ENCODE measurements at regions of chr2 and their contacts with region 1.

Region 1: GRCh38 chr2:114968748-114969400 is 526.4 kb downstream of the DPP10 start:
- DNase-seq: no peak
- ATAC-seq: no peak
- H3K4me3 ChIP-seq: no peak overlapping the region
- H3K27ac ChIP-seq: no peak overlapping the region
- H3K4me1 ChIP-seq: no peaks in the 10 kb centered on the region
- H3K27me3 ChIP-seq: no peaks in the 10 kb centered on the region
- CTCF ChIP-seq: no peak
- EP300 ChIP-seq: no peak
- POLR2A ChIP-seq: no peak
- RAD21 ChIP-seq: no peak

Region 2: GRCh38 chr2:114373591-114373990 is 595.3 kb before region 1 on chr2:
- CTCF ChIA-PET with region 1: no interaction called
- POLR2A ChIA-PET with region 1: no interaction called
- in situ Hi-C with region 1: no loop called
- intact Hi-C with region 1: loop called (anchors 5 kb)
- DNase-seq: no peak
- ATAC-seq: no peak
- H3K4me3 ChIP-seq: no peak overlapping the region
- H3K27ac ChIP-seq: no peak overlapping the region
- H3K4me1 ChIP-seq: no peaks in the 10 kb centered on the region
- H3K27me3 ChIP-seq: no peaks in the 10 kb centered on the region; a peak in 1 of 5 replicates
- CTCF ChIP-seq: no peak
- EP300 ChIP-seq: no peak
- POLR2A ChIP-seq: no peak
- RAD21 ChIP-seq: no peak